ENCODE measurements at regions of chr17 and their contacts with region 1.

Region 1: DNA sequence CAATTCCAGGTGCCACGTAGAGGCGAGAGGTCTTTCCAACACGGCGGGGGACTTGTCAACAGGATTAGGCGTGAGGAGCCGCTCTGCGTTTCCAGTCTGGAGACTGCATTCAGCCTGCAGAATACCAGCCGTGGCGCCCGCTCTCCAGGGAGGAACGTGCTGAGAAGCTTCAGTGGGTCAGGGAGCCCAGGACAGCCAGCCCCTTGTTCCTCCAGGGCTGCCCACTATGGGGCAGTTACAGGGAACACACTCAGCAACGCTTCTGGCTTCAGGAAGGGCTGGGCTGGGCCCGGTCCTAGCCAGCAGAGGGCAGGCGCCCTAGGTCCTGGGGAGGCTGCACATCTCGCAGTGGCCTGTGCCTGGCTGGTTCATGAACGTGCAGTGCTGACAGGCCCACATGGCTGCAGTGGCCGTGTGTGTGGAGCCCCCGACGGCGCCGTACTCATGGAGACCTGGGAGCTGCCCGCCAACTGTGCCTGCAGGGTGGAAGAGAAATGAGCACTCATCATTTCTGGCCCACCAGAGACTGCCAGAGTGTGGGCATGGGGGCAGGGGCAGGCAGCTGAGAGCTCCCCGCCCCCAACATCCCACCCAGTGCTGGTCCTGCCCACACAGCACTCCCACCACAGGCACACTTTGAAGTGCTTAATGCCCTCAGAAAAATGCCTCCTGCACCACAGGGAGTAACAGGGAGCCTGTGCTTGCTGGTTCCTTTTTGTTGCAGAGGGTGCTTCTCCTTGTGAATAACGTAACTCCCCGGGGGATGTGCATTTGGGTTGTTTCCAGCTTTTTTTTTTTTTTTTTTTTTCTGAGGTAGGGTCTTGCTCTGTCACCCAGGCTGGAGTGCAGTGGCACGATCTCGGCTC is 7.0 kb upstream of the FAAP100 start:
- DNase-seq: no peak
- ATAC-seq: peak; percentile 82
- H3K4me3 ChIP-seq: no peak overlapping the region
- H3K27ac ChIP-seq: no peak overlapping the region
- H3K4me1 ChIP-seq: peaks cover 21% of the 10 kb centered on the region
- H3K27me3 ChIP-seq: no peaks in the 10 kb centered on the region
- CTCF ChIP-seq: peak; percentile 43
- EP300 ChIP-seq: no peak
- POLR2A ChIP-seq: 0 out of 4 replicates have a peak, but pooled peaks of 1 of the 2 experiments have one; percentile 25
- RAD21 ChIP-seq: peak; percentile 29; the same call in 1 of the 2 replicates

Region 2: GRCh38 chr17:81601525-81602120 is 42.4 kb after region 1 on chr17:
- CTCF ChIA-PET with region 1: interaction called, 12 read pairs
- POLR2A ChIA-PET with region 1: no interaction called
- in situ Hi-C with region 1: no loop called
- intact Hi-C with region 1: loop called (anchors 2 kb)
- DNase-seq: peak; percentile 62
- ATAC-seq: peak; percentile 94
- H3K4me3 ChIP-seq: no peak overlapping the region
- H3K27ac ChIP-seq: no peak overlapping the region
- H3K4me1 ChIP-seq: no peaks in the 10 kb centered on the region
- H3K27me3 ChIP-seq: no peaks in the 10 kb centered on the region
- CTCF ChIP-seq: peak; percentile 84
- EP300 ChIP-seq: no peak
- POLR2A ChIP-seq: no peak
- RAD21 ChIP-seq: peak; percentile 54; the same call in 1 of the 2 replicates